ENCODE measurements at regions of chr5 and their contacts with region 1.

Region 1: DNA sequence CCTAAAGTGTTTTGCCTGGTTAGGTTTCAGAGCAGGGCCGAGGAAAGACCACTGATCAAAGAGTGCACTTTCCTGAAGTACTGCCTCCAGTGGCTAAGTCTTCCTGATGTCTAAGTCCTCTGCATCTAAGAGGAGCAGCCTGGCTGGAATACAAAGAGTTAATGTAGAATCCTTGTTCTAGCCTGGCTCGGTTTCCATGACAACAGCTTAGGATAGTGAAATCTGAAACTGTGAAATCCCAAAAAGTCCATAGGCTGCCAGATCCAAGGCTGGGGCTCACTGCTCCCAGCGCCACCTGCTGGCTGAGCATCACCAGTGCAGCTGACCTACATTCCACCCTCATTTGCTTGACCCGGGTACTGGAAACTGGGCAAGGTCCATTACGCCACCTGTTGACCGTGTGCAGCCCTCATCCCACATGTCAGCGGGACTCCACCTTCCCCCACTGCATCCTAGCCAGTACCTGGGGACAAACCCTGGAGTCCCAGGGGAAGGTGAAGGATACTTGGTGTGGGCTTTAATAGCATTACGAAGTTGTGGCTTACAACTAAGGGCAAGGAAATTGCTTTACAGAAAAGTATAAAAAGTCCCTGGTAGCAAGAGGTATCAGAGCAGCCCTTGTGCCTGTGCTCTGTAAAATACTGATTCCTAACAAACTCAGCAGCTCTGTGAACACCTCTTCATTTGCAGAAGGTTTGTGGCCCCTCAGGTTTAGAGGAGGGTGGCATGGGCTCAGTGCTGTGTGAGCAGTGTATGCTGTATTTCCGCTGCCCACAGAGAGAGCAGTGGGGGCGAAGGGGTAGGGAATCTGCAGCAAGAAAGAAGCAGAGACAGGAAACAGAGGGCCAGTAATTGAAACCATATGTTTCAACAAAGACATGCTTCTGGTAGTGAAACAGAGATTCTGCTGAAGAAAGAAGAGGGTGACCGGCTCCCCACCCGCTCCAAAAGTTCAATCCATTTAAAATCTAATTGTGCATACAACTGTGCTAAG is 36.0 kb downstream of the PCDHGC5 start:
- DNase-seq: peak; percentile 90
- H3K4me3 ChIP-seq: no peak overlapping the region
- H3K27ac ChIP-seq: peak overlapping the region; percentile 74
- H3K4me1 ChIP-seq: peaks cover 51% of the 10 kb centered on the region
- H3K27me3 ChIP-seq: no peaks in the 10 kb centered on the region
- CTCF ChIP-seq: peak; percentile 99 to 100

Region 2: DNA sequence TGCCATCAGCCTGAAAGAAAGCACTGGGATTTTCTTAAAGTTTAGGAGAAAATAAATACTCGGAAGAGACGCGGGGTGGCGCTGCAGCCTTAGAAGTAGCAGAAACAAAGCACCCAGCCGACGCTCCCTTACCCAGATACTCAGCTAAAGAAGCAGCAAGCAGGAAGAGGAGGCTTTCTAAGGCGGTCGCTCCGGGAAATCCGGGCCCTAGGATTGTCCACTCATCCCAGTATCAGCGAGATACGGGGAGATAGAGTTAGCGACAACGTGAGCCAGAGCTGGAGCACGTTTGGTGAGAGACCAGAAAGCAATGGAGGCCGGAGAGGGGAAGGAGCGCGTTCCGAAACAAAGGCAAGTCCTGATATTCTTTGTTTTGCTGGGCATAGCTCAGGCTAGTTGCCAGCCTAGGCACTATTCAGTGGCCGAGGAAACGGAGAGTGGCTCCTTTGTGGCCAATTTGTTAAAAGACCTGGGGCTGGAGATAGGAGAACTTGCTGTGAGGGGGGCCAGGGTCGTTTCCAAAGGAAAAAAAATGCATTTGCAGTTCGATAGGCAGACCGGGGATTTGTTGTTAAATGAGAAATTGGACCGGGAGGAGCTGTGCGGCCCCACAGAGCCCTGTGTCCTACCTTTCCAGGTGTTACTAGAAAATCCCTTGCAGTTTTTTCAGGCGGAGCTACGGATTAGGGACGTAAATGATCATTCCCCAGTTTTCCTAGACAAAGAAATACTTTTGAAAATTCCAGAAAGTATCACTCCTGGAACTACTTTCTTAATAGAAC is 430.2 kb before region 1 on chr5 and contains the start of gene PCDHB2:
- CTCF ChIA-PET with region 1: no interaction called
- dilution Hi-C with region 1: no loop called
- in situ Hi-C with region 1: no loop called
- intact Hi-C with region 1: loop called (anchors 2 kb)
- DNase-seq: peak; percentile 71
- H3K4me3 ChIP-seq: peak within 1 kb of the TSS; percentile 58 to 69 (median 59)
- H3K27ac ChIP-seq: peak within 1 kb of the TSS; percentile 32
- H3K4me1 ChIP-seq: no peaks in the 10 kb centered on the region
- H3K27me3 ChIP-seq: no peaks in the 10 kb centered on the region
- CTCF ChIP-seq: peak; percentile 49 to 57
- total RNA-seq, gene PCDHB2: 2.2 to 6.8 TPM

Region 3: DNA sequence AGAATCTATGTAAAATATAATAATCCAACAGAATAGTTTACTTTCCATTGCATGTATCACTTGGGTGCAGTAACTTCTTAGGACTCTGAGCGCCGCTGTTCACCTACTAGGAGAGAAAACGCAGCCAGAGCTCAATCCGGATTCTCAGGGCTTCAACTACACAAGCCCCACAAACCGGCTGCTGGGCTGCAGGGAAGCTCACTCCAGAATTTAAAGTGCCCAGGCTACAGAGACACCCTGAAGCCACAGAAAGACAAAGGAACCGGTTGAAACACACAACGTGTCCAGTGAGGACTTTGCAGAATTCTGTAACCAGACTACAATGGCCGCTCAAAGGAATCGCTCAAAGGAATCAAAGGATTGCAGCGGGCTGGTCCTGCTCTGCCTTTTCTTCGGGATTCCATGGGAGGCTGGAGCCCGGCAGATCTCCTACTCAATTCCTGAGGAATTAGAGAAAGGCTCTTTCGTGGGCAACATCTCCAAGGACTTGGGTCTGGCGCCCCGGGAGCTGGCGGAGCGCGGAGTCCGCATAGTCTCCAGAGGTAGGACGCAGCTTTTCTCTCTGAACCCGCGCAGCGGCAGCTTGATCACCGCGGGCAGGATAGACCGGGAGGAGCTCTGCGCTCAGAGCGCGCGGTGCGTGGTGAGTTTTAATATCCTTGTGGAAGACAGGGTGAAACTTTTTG is 111.9 kb before region 1 on chr5 and contains the start of gene PCDHGA10:
- CTCF ChIA-PET with region 1: interaction called, 6 read pairs
- dilution Hi-C with region 1: no loop called
- in situ Hi-C with region 1: no loop called
- intact Hi-C with region 1: loop called (anchors 1 kb)
- DNase-seq: peak; percentile 34
- H3K4me3 ChIP-seq: no peak within 1 kb of the TSS
- H3K27ac ChIP-seq: no peak within 1 kb of the TSS
- H3K4me1 ChIP-seq: no peaks in the 10 kb centered on the region
- H3K27me3 ChIP-seq: no peaks in the 10 kb centered on the region
- CTCF ChIP-seq: no peak
- total RNA-seq, gene PCDHGA10: 7.8 to 7.9 TPM

Region 4: GRCh38 chr5:141475625-141476131 is 49.2 kb before region 1 on chr5 and contains the start of gene PCDHGC3:
- CTCF ChIA-PET with region 1: interaction called, 5 read pairs
- dilution Hi-C with region 1: loop called (anchors 5 kb)
- in situ Hi-C with region 1: loop called (anchors 5 kb)
- intact Hi-C with region 1: loop called (anchors 1 kb)
- DNase-seq: peak; percentile 95
- H3K4me3 ChIP-seq: peak within 1 kb of the TSS; percentile 50 to 73 (median 72)
- H3K27ac ChIP-seq: peak within 1 kb of the TSS; percentile 79
- H3K4me1 ChIP-seq: peaks cover 25% of the 10 kb centered on the region
- H3K27me3 ChIP-seq: no peaks in the 10 kb centered on the region
- CTCF ChIP-seq: peak; percentile 14 to 46
- total RNA-seq, gene PCDHGC3: 74.7 to 76.3 TPM

Region 5: DNA sequence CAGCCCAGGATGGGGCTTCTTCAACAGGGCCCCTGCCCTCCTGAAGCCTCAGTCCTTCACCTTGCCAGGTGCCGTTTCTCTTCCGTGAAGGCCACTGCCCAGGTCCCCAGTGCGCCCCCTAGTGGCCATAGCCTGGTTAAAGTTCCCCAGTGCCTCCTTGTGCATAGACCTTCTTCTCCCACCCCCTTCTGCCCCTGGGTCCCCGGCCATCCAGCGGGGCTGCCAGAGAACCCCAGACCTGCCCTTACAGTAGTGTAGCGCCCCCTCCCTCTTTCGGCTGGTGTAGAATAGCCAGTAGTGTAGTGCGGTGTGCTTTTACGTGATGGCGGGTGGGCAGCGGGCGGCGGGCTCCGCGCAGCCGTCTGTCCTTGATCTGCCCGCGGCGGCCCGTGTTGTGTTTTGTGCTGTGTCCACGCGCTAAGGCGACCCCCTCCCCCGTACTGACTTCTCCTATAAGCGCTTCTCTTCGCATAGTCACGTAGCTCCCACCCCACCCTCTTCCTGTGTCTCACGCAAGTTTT is 12.5 kb before region 1 on chr5:
- CTCF ChIA-PET with region 1: interaction called, 3 read pairs
- dilution Hi-C with region 1: no loop called
- in situ Hi-C with region 1: no loop called
- intact Hi-C with region 1: loop called (anchors 1 kb)
- DNase-seq: peak; percentile 50
- H3K4me3 ChIP-seq: peak overlapping the region in 1 of 3 experiments; percentile 32
- H3K27ac ChIP-seq: peak overlapping the region; percentile 82
- H3K4me1 ChIP-seq: peaks cover 66% of the 10 kb centered on the region
- H3K27me3 ChIP-seq: no peaks in the 10 kb centered on the region
- CTCF ChIP-seq: peak; percentile 78 to 90